Mammary epithelial cell (primary cell): ENCODE measurements at regions of chr6 and their contacts with region 1.

Region 1: GRCh38 chr6:11139056-11139960 is 27.8 kb upstream of the ERVFRD-1 start:
- DNase-seq: peak; percentile 97
- H3K4me3 ChIP-seq: peak overlapping the region in 2 of 3 experiments; percentile 2 to 23
- H3K27ac ChIP-seq: peak overlapping the region; percentile 94
- H3K4me1 ChIP-seq: peaks cover 51% of the 10 kb centered on the region
- H3K27me3 ChIP-seq: no peaks in the 10 kb centered on the region
- CTCF ChIP-seq: no peak

Region 2: DNA sequence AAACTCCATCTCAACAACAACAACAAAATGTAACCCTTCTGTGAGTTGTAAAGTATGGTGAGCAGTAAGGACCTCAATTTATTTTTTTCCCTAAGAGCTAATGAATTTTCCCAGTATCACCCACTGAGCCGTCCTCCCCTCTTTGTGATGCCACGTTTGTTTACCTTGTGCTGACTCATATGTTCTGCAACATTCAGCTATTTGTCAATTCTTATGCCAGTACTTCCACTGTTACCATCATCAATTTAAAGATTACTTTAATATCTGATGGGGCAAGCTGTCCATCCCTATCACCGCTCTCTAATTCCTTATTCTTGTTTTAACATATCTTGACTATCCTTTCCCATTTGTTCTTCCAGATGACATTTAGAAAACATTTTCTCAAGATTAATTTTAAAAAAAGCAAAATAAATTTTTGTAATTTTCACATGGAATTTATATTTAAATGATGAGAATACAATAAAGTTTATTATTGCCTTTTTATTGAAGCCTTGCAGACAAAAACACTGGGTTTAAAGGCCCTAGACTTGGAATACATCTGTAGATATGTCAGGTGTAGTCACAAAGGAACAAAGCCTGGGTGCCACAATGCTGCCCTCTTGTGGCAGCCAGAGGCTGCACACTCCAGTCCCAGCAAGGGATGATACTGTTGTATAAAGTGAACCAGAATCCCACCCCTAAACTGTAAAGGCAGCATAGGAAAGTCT is 338.3 kb before region 1 on chr6:
- CTCF ChIA-PET with region 1: no interaction called
- dilution Hi-C with region 1: no loop called
- in situ Hi-C with region 1: no loop called
- intact Hi-C with region 1: no loop called
- DNase-seq: peak; percentile 43
- H3K4me3 ChIP-seq: no peak overlapping the region
- H3K27ac ChIP-seq: no peak overlapping the region
- H3K4me1 ChIP-seq: peaks cover 6% of the 10 kb centered on the region
- H3K27me3 ChIP-seq: no peaks in the 10 kb centered on the region
- CTCF ChIP-seq: peak; percentile 98 to 99

Region 3: DNA sequence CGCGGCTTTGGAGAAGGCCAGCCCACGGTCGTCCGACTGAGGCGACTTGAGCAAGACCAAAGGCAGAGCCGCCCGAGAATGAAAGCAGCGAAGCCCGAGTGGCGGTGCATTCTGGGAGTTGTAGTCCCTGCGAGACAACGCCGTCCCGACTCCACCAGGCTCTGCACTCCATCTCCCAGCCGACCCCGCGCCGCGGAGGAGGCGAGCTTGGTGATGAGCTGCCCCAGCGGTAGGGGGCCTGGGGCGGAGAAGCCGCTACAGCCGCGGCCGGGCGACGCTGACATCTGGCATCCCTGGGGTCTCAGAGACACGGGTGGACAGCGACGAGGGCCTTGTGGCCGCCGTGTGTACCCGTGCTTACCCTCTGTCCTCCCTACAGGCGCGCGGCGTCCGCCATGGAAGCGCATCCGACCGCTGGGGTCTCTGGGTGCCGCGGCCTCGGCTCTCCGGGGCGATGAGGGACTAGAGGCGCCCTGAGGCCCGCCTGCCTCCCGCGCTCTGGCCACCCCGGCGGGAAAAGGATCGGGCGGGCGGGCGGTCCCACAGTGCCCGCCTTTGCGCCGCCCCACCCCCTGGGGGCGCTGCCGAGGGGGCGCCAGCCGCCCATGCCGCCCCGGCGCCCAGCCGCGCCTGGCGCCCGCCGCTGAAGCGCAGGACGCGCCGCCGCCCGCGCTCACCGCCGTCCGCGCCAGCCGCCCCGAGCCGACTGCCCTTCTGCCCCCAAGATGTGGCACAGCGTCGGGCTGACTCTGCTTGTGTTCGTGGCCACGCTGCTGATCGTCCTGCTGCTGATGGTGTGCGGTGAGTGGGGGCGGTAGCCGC is 45.5 kb before region 1 on chr6 and contains the start of gene SMIM13:
- CTCF ChIA-PET with region 1: no interaction called
- dilution Hi-C with region 1: loop called (anchors 5 kb)
- in situ Hi-C with region 1: no loop called
- intact Hi-C with region 1: loop called (anchors 1 kb)
- DNase-seq: peak; percentile 95
- H3K4me3 ChIP-seq: peak within 1 kb of the TSS; percentile 81 to 100 (median 89)
- H3K27ac ChIP-seq: peak within 1 kb of the TSS; percentile 87
- H3K4me1 ChIP-seq: peaks cover 12% of the 10 kb centered on the region
- H3K27me3 ChIP-seq: no peaks in the 10 kb centered on the region
- CTCF ChIP-seq: peak; percentile 16 to 42
- total RNA-seq, gene SMIM13: 12.3 to 17.5 TPM

Region 4: DNA sequence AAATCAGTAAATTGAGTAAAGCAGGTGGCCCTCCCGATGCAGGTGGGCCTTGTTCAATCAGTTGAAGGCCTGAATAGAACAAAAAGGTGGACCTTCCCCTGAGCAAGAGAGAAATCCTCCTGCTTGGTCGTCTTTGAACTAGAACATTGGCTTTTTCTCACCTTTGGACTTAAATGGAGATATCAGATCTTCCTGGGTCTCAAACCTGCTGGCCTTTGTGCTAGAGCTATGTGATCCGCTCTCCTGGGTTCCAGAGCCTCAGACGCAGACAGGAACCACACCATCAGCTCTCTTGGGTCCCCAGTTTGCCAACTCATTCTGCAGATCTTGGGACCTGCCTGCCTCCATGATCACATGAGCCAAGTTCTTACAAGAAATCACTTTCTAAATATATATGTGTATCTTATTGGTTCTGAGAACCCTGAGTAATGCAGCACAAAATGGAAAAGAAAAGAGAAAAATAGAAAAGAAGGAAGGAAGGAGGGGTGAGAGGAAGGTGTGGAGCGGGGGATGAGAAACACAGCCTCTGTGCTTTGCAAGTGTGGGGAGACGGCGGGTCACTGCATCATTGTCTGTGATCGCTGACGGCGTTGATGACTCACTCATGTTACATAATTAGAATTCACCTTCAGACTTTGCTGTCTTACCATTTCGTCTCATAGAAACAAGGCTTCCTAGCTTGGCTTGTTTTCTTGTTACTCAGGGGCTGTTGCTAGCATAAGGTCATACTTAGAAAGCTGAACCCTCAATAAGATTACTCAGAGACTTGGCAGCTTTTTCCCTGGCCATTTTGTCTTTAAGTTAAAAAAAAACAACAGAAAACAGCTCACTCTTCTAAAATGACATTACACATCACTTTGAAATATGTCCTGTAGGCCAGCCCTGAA is 178.8 kb after region 1 on chr6:
- CTCF ChIA-PET with region 1: no interaction called
- dilution Hi-C with region 1: no loop called
- in situ Hi-C with region 1: no loop called
- intact Hi-C with region 1: loop called (anchors 2 kb)
- DNase-seq: peak; percentile 99
- H3K4me3 ChIP-seq: no peak overlapping the region
- H3K27ac ChIP-seq: peak overlapping the region; percentile 96
- H3K4me1 ChIP-seq: peaks cover 51% of the 10 kb centered on the region
- H3K27me3 ChIP-seq: no peaks in the 10 kb centered on the region
- CTCF ChIP-seq: no peak